ENCODE measurements at regions of chr1 and their contacts with region 1.

Region 1: GRCh38 chr1:167797015-167797414 is 75.2 kb downstream of the MPZL1 start:
- DNase-seq: peak; percentile 73
- ATAC-seq: peak; percentile 98
- H3K4me3 ChIP-seq: no peak overlapping the region
- H3K27ac ChIP-seq: peak overlapping the region; percentile 70
- H3K4me1 ChIP-seq: peaks cover 18% of the 10 kb centered on the region
- H3K27me3 ChIP-seq: no peaks in the 10 kb centered on the region
- CTCF ChIP-seq: no peak

Region 2: DNA sequence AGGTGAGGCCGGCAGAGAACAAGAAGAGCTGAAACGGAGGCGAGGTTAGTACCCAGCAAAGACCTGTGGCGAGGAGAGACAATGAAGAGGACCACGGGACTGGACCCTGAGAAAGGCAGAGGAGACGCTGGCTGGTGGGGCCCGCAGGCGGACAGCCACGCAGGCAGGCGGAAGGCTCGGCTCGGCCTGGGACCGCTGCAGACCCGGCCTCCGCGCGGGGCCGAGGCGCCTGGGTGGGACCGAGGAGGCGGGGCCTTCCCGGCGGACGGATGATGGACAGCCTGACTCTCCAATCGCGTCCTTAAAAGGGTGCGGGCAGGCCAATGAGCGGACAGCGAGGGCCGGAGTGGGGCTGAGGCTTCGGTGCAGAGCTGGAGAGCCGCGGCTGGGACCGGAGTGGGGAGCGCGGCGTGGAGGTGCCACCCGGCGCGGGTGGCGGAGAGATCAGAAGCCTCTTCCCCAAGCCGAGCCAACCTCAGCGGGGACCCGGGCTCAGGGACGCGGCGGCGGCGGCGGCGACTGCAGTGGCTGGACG is 75.3 kb before region 1 on chr1 and contains the start of gene MPZL1:
- intact Hi-C with region 1: loop called (anchors 10 kb)
- DNase-seq: peak; percentile 97
- ATAC-seq: peak; percentile 99
- H3K4me3 ChIP-seq: peak within 1 kb of the TSS; percentile 83
- H3K27ac ChIP-seq: peak within 1 kb of the TSS; percentile 85
- H3K4me1 ChIP-seq: peaks cover 26% of the 10 kb centered on the region
- H3K27me3 ChIP-seq: no peaks in the 10 kb centered on the region
- CTCF ChIP-seq: no peak
- total RNA-seq, gene MPZL1: 85.2 TPM

Measured in upper lobe of right lung (tissue), 1 donor.